Spleen (tissue), 13 donors: ENCODE measurements at regions of chr5 and their contacts with region 1.

Region 1: GRCh38 chr5:159444441-159445082 is 114.3 kb upstream of the IL12B start:
- DNase-seq: no peak
- H3K4me3 ChIP-seq: no peak overlapping the region
- H3K27ac ChIP-seq: no peak overlapping the region
- H3K4me1 ChIP-seq: no peaks in the 10 kb centered on the region
- H3K27me3 ChIP-seq: no peaks in the 10 kb centered on the region
- CTCF ChIP-seq: peak in 7 of 11 experiments; percentile 24 to 47 (median 29)
- POLR2A ChIP-seq: no peak

Region 2: DNA sequence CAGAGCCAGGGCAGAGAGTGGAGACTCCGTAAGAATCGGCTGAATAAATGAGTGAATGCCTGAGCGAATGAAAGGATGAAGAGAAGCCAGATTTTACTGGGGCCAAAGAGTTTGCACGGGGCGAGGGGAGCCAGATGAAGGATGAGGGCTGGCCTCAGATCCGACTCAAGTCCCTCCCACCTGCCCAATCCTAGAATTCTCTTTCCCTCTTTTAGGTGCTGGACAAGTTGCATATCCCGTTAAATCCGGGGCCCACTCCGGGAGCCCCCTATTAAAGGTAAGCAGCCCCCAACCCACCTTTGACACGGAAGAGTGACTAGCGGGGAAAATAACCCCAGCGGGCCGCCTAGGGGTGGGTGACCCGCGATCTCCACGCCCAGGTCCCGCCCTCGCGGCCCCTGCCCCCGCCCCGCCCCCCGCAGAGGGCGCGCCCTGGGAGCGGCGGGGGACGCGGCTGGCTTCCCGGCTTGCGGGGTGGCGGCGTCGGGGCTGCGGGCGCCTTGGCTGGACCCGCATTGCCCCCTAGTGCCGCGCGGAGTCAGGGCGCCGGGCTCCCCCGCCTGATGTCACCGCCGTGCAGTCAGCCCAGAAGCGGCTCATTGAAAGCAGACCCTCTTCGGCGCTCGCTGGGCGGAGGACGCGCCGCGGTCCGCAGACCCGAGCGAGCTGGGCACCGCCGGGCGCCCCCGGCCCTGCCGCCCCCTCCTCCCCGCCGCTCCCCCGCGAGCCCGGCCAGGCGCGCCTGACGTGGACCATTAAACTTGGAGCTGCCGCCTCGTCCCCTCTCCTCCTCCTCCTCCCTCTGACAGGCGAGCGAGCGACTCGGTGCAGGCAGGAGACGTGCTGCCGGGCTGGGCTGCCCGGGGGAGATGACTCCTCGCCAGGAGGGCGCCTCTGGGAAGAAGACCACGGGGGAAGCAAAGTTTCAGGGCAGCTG is 471.6 kb after region 1 on chr5 and contains the start of gene ADRA1B:
- intact Hi-C with region 1: loop called (anchors 10 kb)
- DNase-seq: peak; percentile 89
- H3K4me3 ChIP-seq: peak within 1 kb of the TSS; percentile 7 to 68 (median 30)
- H3K27ac ChIP-seq: peak within 1 kb of the TSS in 7 of 8 donors; percentile 49 to 83 (median 79)
- H3K4me1 ChIP-seq: peaks cover 0 to 40% (median 13%) of the 10 kb centered on the region in 6 donors
- H3K27me3 ChIP-seq: peaks cover 0 to 61% (median 21%) of the 10 kb centered on the region in 7 donors
- CTCF ChIP-seq: peak in 9 of 11 experiments; percentile 23 to 72 (median 58)
- POLR2A ChIP-seq: no peak
- total RNA-seq, gene ADRA1B: 6.9 to 39.6 (median 13.8) TPM

Region 3: DNA sequence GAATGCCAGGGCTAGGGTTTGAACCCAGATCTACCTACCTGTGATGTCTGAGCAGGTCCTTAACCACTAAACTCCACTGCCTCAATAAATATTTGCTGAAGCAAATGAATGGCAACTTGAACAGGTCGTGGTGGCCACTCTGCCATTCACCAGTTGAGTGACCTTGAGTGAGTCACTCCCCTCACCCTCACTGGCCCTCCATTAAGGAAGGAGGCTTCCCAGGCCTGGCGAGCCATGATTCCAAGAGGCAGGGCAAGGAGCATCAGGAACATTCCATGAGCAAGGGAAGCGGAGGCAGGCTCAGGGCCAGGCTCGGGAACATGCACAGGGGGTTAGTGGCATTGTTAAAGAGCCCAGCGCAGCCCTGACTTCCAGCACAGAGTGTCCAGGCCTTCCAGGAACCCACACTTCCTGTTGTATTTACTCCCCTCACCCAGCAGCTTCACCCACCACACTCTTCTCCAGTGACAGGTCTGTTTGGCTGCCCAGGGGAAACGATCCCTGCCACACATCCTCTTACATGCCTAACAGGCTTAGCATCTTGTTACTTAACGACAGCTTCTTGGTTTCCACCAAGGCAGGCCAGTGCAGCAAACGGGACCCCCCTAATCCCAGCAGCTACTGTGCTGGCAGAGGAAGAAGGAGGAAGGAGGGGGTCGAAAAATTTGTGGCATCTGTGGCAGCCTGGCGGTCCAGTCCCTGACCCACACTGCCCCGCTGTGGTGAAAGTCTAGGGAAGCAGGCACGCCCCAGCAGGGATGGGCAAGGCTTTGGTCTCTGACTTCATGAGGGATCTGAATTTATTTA is 520.7 kb after region 1 on chr5:
- intact Hi-C with region 1: loop called (anchors 10 kb)
- DNase-seq: peak; percentile 79
- H3K4me3 ChIP-seq: no peak overlapping the region
- H3K27ac ChIP-seq: peak overlapping the region in 5 of 8 donors; percentile 3 to 47 (median 22)
- H3K4me1 ChIP-seq: peaks cover 0 to 14% (median 0%) of the 10 kb centered on the region in 6 donors
- H3K27me3 ChIP-seq: peaks cover 0 to 45% (median 11%) of the 10 kb centered on the region in 7 donors
- CTCF ChIP-seq: peak in 10 of 11 experiments; percentile 22 to 79 (median 54)
- POLR2A ChIP-seq: no peak